AG04450 (cell line): ENCODE measurements at regions of chr12 and their contacts with region 1.

Region 1: GRCh38 chr12:230925-231671 is 17.1 kb upstream of the SLC6A12 start:
- DNase-seq: no peak
- H3K4me3 ChIP-seq: no peak overlapping the region
- H3K27ac ChIP-seq: no peak overlapping the region
- H3K27me3 ChIP-seq: peaks cover 52% of the 10 kb centered on the region
- CTCF ChIP-seq: no peak

Region 2: GRCh38 chr12:219891-220352 is 11.2 kb before region 1 on chr12:
- CTCF ChIA-PET with region 1: interaction called, 10 read pairs
- POLR2A ChIA-PET with region 1: no interaction called
- DNase-seq: no peak
- H3K4me3 ChIP-seq: no peak overlapping the region
- H3K27ac ChIP-seq: no peak overlapping the region
- H3K27me3 ChIP-seq: peaks cover 32% of the 10 kb centered on the region
- CTCF ChIP-seq: peak; percentile 67